Aorta (tissue), 5 donors: ENCODE measurements at regions of chr7 and their contacts with region 1.

Region 1: DNA sequence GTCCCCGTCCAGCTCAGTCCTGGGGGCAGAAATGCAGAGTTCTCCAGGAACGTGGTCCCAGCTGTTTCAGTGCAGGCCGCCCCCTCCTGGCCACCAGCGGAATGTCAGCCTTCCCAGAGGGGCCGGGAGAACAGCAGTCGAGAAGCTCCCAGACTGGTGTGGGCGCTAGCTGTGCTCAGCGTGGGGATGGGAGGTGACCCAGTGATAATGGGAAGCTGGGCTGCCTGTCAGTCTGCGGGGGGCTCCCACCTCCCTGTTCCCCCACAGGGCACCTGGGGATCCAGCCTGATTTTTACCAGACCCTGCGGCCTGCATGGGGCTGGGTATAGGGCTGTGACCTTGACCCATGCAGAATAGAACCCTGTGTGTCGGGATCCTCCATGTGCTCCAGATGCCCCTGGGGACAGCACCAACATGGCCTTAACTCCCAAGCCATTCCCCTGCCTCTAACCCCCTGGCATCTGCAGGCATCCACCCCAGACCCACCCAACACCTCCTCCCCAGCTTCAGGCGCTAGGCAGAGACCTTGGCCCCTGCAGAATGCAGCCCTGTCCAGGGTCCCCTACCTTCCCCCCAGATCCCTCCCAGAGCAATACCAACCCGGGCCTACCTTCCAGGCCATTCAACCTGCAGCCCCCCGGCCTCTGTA is 946 bp upstream of the ELN start:
- DNase-seq: peak; percentile 89 to 95
- ATAC-seq: peak; percentile 82
- H3K4me3 ChIP-seq: no peak overlapping the region
- H3K27ac ChIP-seq: peak overlapping the region; percentile 83 to 89
- H3K4me1 ChIP-seq: peaks cover 0 to 8% of the 10 kb centered on the region in 2 donors
- H3K27me3 ChIP-seq: no peaks in the 10 kb centered on the region

Region 2: DNA sequence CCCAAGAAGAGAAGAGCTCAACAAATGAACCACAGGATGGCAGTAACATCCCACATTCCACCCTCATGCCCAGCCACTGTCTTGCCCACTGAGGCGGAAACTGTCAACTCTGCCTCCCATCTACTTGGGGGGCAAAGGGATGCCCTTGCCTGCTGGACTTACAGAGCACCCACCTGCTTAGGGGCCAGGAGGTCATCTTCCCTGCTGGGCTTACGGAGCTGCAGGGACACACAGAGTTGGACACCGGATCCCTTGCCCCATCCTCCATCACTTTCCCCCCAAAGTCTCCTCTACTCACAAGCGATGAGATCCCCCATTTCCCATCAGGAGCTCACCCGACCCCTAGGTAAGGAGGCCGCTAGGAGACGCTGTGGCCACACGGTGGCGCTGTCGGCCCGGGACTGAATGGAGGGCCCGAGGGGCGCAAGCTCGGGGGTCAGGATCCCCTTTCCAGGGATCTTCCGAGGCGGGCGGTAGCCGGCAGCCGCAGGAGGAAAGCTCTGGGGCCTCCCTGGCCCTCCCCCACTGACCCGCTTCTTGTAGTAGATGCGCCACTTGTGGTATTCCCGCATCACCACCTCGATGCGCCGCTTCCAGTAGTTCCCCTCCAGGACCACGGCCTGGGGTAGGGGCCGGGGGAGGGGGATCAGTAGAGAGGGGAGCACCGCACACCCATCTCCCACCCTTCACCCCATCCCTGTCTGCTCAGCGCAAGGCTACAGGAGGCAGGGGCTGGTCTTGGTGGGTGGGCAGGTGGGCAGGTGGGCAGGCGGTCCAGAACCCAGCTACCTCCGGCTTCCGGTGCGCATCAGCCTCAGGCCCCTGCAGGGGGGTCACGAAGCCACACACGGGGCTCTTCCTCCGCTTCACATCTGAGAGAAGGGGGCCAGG is 420.0 kb before region 1 on chr7:
- intact Hi-C with region 1: no loop called
- DNase-seq: peak; percentile 67 to 91
- ATAC-seq: peak; percentile 84
- H3K4me3 ChIP-seq: no peak overlapping the region
- H3K27ac ChIP-seq: no peak overlapping the region
- H3K4me1 ChIP-seq: no peaks in the 10 kb centered on the region
- H3K27me3 ChIP-seq: no peaks in the 10 kb centered on the region

Region 3: DNA sequence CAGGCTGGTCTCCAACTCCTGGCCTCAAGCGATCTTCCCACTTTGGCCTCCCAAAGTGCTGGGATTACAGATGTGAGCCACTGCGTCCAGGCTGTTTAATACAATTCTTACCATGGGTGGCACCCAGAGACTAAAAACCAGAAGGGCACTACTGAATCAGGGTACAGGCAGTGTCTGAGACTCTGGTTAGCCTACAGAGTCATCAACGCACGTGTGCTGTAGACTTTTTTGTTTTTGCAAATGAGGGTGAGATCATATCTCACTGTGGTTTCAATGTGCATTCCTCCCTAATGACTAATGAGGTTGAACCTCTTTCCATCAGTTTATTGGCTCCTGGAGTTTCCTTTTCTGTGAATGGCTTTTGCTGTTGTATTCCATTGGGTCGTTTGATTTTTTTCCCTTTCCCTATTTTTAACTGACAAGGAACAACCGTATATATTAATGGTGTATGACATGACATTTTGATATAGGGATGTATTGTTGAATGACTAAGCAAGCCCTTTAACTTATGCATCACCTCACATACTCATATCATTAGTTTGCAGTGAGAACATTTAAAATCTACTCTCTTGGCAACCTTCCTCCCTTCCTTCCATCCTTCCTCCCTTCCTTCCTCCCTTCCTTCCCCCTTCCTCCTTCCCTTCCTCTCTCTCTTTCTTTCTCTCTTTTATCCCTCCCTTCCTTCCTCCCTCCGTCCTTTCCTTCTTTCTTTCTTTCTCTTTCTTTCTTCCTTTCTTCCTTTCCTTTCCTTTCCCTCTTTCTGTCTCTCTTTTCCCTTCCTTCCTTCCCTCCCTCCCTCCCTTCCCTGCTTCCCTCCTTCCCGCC is 175.4 kb before region 1 on chr7:
- intact Hi-C with region 1: no loop called
- DNase-seq: no peak
- ATAC-seq: peak; percentile 76
- H3K4me3 ChIP-seq: no peak overlapping the region
- H3K27ac ChIP-seq: peak overlapping the region in 1 of 2 donors; percentile 61
- H3K4me1 ChIP-seq: no peaks in the 10 kb centered on the region
- H3K27me3 ChIP-seq: no peaks in the 10 kb centered on the region

Region 4: GRCh38 chr7:73879977-73880681 is 146.9 kb before region 1 on chr7:
- intact Hi-C with region 1: loop called in 1 of 2 experiments (anchors 5 kb)
- DNase-seq: no peak
- ATAC-seq: peak; percentile 71
- H3K4me3 ChIP-seq: no peak overlapping the region
- H3K27ac ChIP-seq: peak overlapping the region; percentile 49 to 60
- H3K4me1 ChIP-seq: peaks cover 5 to 6% of the 10 kb centered on the region in 2 donors
- H3K27me3 ChIP-seq: no peaks in the 10 kb centered on the region

Region 5: DNA sequence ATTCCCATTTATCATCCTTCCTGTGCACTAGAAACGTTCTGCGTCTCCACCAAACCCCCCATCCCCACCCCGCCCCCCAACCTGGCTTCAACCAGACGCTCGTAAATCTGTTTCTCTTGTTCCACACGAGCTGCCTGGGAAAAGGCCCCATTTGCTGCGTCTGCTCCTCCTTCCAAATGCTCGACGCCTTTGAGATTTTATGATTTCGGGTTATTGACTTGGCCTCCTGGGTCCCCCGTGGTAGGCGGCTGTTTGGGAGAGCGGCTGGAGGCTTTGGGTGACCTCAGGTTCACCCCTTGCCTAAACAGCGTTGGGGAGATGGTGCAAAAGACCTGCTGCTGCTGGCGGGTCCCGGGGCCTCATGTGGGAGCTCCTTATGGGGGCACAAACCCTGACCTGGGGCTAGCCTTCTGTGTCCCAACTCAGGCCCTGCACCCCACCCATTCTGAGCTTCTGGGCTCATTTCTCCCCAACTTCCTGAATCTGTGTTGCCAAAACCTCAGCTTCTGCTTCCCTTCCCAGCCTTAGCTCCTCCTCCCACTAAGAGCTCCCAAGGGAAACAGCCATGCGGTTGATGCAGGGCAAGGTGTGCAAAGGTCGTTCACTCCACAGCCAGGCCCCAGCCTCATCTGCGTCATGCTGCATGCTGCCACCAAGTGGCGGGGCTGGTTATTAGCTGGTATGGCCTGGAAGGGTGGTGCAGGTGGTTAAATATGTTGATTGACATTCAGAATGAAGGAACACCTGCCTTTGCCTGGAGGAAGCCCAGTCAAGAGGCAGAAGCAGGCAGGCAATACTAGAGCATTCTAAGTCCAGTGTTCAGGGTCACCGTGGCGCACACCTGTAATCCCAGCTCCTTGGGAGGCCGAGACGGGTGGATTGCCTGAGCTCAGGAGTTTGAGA is 48.1 kb before region 1 on chr7:
- intact Hi-C with region 1: loop called (anchors 10 kb)
- DNase-seq: peak in 1 of 2 donors; percentile 79
- ATAC-seq: peak; percentile 49
- H3K4me3 ChIP-seq: no peak overlapping the region
- H3K27ac ChIP-seq: peak overlapping the region in 1 of 2 donors; percentile 13
- H3K4me1 ChIP-seq: no peaks in the 10 kb centered on the region
- H3K27me3 ChIP-seq: no peaks in the 10 kb centered on the region

Region 6: DNA sequence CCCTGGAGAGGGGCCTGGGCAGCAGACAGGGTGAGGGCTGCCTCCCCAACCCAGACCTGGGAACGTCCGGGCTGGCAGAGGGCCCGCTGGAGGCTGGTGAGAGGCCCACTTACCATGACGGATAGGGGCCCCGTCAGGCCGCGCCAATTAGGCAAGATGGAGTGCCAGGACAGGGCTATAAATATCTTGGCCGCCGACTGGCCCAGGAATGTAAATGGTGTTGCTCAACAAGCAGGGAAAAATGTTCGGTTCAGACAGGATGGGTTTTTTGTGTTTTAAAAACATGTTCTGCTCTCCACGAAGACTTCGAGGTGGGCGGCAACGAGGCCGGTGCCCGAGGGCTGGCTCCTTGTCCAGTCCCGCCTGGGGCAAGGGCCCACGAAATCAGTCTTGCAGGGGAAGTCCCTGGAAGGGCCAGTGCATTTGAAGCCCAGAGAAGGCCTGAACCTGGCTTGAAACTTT is 34.9 kb before region 1 on chr7:
- intact Hi-C with region 1: loop called (anchors 5 kb)
- DNase-seq: peak; percentile 93 to 96
- ATAC-seq: peak; percentile 88
- H3K4me3 ChIP-seq: no peak overlapping the region
- H3K27ac ChIP-seq: peak overlapping the region; percentile 84 to 97
- H3K4me1 ChIP-seq: no peaks in the 10 kb centered on the region
- H3K27me3 ChIP-seq: no peaks in the 10 kb centered on the region